ENCODE measurements at regions of chr6 and their contacts with region 1.

Region 1: GRCh38 chr6:83815631-83816272 is 37.4 kb upstream of the RIPPLY2 start:
- DNase-seq: peak in 1 of 2 experiments; percentile 57
- H3K4me3 ChIP-seq: no peak overlapping the region
- H3K27ac ChIP-seq: no peak overlapping the region
- H3K4me1 ChIP-seq: peaks cover 8% of the 10 kb centered on the region; the same call in 1 of the 2 replicates
- H3K27me3 ChIP-seq: no peaks in the 10 kb centered on the region
- CTCF ChIP-seq: no peak

Region 2: DNA sequence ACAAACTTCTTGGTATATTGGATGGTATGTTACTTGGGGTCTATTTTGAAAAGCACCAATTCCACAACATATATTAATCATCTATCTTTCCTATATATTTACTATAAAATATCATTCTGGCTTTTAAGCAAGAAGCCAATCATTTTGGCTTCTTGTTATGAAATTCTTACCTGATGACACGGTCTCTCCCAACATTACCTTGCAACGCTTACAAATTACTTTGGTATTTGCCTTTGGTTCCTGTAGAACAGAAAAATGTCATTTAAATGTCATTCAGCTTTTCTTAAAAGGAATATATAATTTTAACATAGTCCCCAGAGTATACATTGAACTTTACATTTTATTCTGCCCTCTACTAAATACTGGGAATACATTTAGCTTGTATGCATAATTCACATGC is 777.5 kb before region 1 on chr6:
- CTCF ChIA-PET with region 1: no interaction called
- POLR2A ChIA-PET with region 1: interaction called, 13 read pairs
- intact Hi-C with region 1: no loop called
- DNase-seq: no peak
- H3K4me3 ChIP-seq: no peak overlapping the region
- H3K27ac ChIP-seq: no peak overlapping the region
- H3K4me1 ChIP-seq: no peaks in the 10 kb centered on the region
- H3K27me3 ChIP-seq: no peaks in the 10 kb centered on the region
- CTCF ChIP-seq: no peak

Region 3: GRCh38 chr6:83859410-83860358 is 43.9 kb after region 1 on chr6 and contains the start of gene CYB5R4:
- CTCF ChIA-PET with region 1: no interaction called
- POLR2A ChIA-PET with region 1: no interaction called
- intact Hi-C with region 1: loop called (anchors 5 kb)
- DNase-seq: peak; percentile 83 to 95
- H3K4me3 ChIP-seq: peak within 1 kb of the TSS; percentile 87
- H3K27ac ChIP-seq: peak within 1 kb of the TSS; percentile 18; the same call in 1 of the 2 replicates
- H3K4me1 ChIP-seq: peaks cover 17% of the 10 kb centered on the region
- H3K27me3 ChIP-seq: no peaks in the 10 kb centered on the region
- CTCF ChIP-seq: peak; percentile 53; the same call in 1 of the 2 replicates
- total RNA-seq, gene CYB5R4: 15.3 and 22.7 TPM in 2 replicates